Adrenal gland (tissue), 19 donors: ENCODE measurements at regions of chr1 and their contacts with region 1.

Region 1: DNA sequence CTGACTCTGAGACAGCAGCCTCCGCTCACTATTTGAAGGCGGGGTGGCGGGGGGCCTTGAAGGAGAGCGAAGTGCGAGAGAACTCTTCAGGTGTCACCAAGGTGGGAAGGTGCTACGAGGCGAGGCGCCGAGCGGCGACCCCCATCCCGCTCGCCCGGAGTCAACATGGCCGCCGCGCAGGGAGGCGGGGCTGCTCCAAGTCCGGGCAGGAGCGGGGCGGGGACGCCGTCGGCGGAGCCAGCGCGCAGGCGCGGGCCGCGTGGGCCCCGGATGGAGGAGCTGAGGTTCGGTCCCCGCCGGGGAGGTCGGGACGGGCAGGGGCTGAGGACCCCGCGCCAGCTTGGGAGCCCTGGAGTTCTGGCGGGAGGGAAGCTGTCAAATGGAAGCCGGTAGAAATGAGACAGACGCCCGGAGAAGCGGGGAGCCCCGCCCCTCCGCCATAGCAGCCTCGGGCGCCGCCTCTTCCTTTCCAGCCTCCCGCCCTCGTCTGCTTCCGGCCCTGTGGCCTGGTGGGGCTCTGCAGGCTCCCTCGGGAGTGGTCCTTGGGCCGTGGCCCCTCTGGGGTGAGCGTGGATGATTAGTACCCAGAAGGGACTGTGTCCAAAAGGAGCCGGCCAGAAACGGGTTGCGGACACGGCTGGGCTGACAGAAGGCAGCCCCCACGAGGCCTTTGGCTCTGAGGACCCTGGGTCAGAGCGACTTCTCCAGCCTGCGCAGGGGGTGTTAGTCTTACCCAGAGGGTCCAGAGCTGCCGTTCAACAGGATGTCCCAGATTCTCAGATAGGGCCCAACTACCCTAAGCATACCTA is at the start of gene PIGV:
- DNase-seq: peak; percentile 83 to 91 (median 87)
- H3K4me3 ChIP-seq: peak within 1 kb of the TSS; percentile 36 to 80 (median 72)
- H3K27ac ChIP-seq: peak within 1 kb of the TSS; percentile 91 to 99 (median 98)
- H3K4me1 ChIP-seq: peaks cover 41 to 58% of the 10 kb centered on the region in 2 donors
- H3K27me3 ChIP-seq: no peaks in the 10 kb centered on the region
- CTCF ChIP-seq: peak in 4 of 6 experiments; percentile 24 to 54 (median 40)
- POLR2A ChIP-seq: peak; percentile 47 to 53
- total RNA-seq, gene PIGV: 11.8 to 43.1 (median 34.1) TPM

Region 2: DNA sequence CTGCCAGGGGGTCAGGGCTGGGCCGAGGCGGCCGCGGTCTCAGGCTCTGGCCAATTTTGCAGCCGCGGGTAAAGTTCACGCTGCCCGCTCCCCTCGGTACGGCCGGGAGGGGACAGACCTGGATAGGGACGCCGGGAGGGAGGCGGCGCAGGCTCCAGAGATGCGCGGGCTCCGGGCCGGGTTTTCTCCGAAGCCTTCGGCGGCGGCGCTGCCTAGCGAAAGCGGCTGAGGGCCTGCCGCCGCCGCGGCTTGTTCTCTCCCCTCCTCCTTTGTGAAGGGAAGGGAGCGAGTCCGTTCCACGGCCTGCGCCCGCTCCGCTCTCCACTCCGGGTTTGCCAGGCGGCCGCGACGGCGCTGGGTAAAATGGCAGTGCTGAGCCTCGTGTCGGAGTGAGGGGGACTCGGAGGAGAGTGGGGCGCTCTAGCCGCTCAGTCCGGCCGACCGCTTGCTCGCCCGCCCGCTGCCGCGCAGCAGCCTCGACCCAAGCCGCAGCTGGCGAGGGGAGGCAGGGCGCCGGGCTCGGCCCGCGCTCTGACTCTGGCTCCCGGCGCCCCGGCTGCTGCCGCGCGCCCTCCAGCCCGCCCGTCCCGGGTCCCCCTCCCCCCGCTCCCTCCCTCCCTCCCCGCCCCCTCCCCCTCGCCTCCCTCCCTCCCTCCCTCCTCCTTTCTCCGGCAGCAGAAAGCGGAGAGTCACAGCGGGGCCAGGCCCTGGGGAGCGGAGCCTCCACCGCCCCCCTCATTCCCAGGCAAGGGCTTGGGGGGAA is 92.4 kb before region 1 on chr1 and contains the start of gene ARID1A:
- intact Hi-C with region 1: loop called (anchors 5 kb)
- DNase-seq: peak; percentile 94 to 97 (median 95)
- H3K4me3 ChIP-seq: peak within 1 kb of the TSS; percentile 74 to 98 (median 86)
- H3K27ac ChIP-seq: peak within 1 kb of the TSS; percentile 73 to 100 (median 93)
- H3K4me1 ChIP-seq: peaks cover 39 to 60% of the 10 kb centered on the region in 2 donors
- H3K27me3 ChIP-seq: no peaks in the 10 kb centered on the region
- CTCF ChIP-seq: peak in 2 of 6 experiments; percentile 32 to 57
- POLR2A ChIP-seq: peak; percentile 79 to 98
- total RNA-seq, gene ARID1A: 28.6 to 90.3 (median 55.6) TPM

Region 3: DNA sequence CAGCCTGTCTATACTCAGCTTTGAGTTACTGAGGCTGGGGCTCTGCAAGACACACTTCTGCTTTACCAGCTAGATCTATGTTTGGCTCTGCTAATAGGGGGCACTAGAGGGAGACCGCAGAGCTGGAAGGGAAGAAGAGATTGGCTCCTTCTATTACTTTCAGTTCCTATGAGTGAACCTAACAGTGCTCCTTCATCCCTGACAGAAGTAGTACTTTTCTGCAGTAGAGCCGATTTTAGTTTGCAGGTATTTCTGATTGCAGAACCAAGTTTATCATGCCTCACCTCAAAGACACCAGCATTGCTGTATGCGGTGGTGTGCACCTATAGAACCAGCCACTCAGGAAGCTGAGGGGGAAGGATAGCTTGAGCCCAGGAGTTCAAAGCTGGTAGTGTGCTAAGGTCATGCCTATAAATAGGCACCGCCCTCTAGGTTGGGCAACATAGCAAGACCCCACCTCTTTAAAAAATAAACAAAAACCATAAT is 32.9 kb after region 1 on chr1:
- intact Hi-C with region 1: no loop called
- DNase-seq: no peak
- H3K4me3 ChIP-seq: no peak overlapping the region
- H3K27ac ChIP-seq: no peak overlapping the region
- H3K4me1 ChIP-seq: peaks cover under 1 to 2% of the 10 kb centered on the region in 2 donors
- H3K27me3 ChIP-seq: no peaks in the 10 kb centered on the region
- CTCF ChIP-seq: no peak
- POLR2A ChIP-seq: no peak

Region 4: GRCh38 chr1:26862781-26863676 is 75.1 kb after region 1 on chr1 and contains the start of gene SFN:
- intact Hi-C with region 1: no loop called
- DNase-seq: no peak
- H3K4me3 ChIP-seq: no peak within 1 kb of the TSS
- H3K27ac ChIP-seq: peak within 1 kb of the TSS in 1 of 5 donors; percentile 97
- H3K4me1 ChIP-seq: peaks cover 4 to 5% of the 10 kb centered on the region in 2 donors
- H3K27me3 ChIP-seq: no peaks in the 10 kb centered on the region
- CTCF ChIP-seq: no peak
- POLR2A ChIP-seq: no peak
- total RNA-seq, gene SFN: 0.06 to 0.43 (median 0.39) TPM in 5 of 9 donors, not detected in the others

Region 5: DNA sequence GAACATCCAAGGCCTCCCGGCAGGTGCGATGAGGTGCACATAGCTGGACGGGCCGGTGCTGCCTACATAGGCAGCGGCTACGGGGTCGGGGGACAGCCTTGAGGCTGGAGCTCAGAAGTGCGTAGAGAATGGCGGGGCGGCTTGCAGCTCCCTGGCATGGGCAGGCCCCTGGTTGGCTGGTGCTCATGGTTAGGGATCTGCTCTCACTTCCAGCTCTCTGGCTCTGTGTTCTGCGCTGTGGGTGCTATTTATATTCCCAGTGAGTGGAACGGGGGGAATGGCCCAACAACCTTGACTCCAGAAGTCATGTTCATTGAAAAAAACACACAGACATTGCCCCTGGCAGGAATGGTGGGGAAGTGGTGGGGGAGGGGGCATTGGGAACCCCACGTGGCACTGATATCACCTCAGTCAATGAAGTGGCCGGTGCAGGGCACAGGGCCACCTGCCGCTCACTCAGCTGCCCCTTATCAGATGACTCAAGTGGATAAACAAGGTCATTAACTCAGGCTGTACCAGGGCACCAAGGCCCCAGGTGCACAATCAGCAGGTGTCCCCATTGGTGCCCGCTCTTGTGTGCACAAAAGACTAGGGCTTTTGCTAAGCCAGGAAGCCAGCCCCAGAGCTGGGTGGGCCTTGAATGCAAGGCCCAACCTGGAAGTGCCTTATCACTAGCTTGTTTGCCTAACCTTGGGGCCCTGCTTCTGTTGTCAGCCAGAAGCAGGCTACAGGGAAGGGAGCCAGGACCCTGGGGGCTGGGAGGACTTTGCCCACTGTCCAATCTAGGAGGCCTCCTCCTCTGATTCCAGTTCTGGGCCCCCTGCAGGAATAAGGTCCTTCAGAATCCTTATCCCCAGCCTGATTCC is 126.1 kb after region 1 on chr1 and contains the start of gene NR0B2:
- intact Hi-C with region 1: no loop called
- DNase-seq: peak; percentile 80 to 95 (median 91)
- H3K4me3 ChIP-seq: peak within 1 kb of the TSS in 2 of 4 donors; percentile 11 to 48
- H3K27ac ChIP-seq: peak within 1 kb of the TSS; percentile 63 to 97 (median 91)
- H3K4me1 ChIP-seq: peaks cover 22 to 34% of the 10 kb centered on the region in 2 donors
- H3K27me3 ChIP-seq: no peaks in the 10 kb centered on the region
- CTCF ChIP-seq: no peak
- POLR2A ChIP-seq: peak; percentile 28 to 85
- total RNA-seq, gene NR0B2: 7.1 to 62.7 (median 14.7) TPM